Caco-2 (cell line): ENCODE measurements at regions of chr3 and their contacts with region 1.

Region 1: DNA sequence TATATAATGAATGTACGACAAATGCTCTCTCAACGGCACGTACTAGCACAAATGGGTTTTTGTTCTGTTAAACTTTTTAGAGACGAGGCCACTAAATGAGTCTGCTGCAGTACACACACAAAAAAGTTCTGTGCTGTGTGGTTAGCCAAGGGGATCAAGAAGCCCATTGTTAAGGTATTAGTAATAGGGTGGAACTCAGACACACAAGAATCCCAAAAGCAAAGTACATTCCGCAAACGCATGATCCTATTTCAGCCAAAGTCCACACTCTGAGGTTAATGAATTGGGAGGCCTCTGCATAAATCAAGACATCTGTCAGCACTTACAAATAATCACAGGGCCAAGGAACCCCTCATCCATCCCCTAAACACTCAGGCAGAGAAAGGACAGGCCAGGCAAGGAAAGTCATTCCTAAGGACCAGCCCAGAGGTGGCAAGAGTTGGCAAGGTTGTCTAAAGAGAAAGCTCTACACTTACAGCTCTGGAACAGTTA is 12.1 kb downstream of the OSBPL10 start:
- DNase-seq: peak; percentile 77 to 80
- H3K4me3 ChIP-seq: no peak overlapping the region
- H3K4me3 Mint-ChIP-seq: peak overlapping the region; percentile 71
- H3K27ac Mint-ChIP-seq: peak overlapping the region; percentile 97
- H3K4me1 ChIP-seq: peaks cover 56% of the 10 kb centered on the region
- H3K4me1 Mint-ChIP-seq: peaks cover 27% of the 10 kb centered on the region
- H3K27me3 ChIP-seq: no peaks in the 10 kb centered on the region
- H3K27me3 Mint-ChIP-seq: no peaks in the 10 kb centered on the region
- CTCF ChIP-seq: no peak

Region 2: GRCh38 chr3:31892916-31893573 is 75.9 kb before region 1 on chr3:
- CTCF ChIA-PET with region 1: no interaction called
- POLR2A ChIA-PET with region 1: no interaction called
- intact Hi-C with region 1: loop called (anchors 2 kb)
- DNase-seq: no peak
- H3K4me3 ChIP-seq: no peak overlapping the region
- H3K4me3 Mint-ChIP-seq: peak overlapping the region; percentile 70
- H3K27ac Mint-ChIP-seq: peak overlapping the region; percentile 92
- H3K4me1 ChIP-seq: peaks cover 53% of the 10 kb centered on the region
- H3K4me1 Mint-ChIP-seq: peaks cover 44% of the 10 kb centered on the region
- H3K27me3 ChIP-seq: no peaks in the 10 kb centered on the region
- H3K27me3 Mint-ChIP-seq: no peaks in the 10 kb centered on the region
- CTCF ChIP-seq: no peak

Region 3: DNA sequence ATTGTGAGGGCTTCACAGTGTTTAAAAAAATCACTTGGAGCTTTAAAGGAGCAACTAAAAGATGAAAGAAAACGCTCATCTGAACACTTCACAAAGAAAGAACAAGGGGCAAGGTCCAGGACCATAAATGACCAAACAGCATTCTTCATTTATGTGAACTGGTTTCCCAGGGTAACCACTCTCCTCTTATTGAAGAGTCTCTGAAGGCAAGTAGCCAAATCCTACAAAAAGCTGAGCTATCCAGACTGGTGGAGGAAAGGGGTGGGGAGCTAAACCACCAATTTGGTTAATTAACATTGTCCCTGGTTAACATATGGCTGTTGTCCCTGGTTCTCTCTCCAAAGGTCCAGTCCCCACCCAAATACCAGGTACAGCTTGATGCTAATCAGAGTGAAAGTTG is 46.0 kb before region 1 on chr3:
- CTCF ChIA-PET with region 1: no interaction called
- POLR2A ChIA-PET with region 1: no interaction called
- intact Hi-C with region 1: loop called (anchors 2 kb)
- DNase-seq: peak; percentile 59 to 81
- H3K4me3 ChIP-seq: peak overlapping the region; percentile 13; the same call in 1 of the 2 replicates
- H3K4me3 Mint-ChIP-seq: peak overlapping the region; percentile 70
- H3K27ac Mint-ChIP-seq: peak overlapping the region; percentile 98
- H3K4me1 ChIP-seq: peaks cover 63% of the 10 kb centered on the region
- H3K4me1 Mint-ChIP-seq: peaks cover 50% of the 10 kb centered on the region
- H3K27me3 ChIP-seq: no peaks in the 10 kb centered on the region
- H3K27me3 Mint-ChIP-seq: no peaks in the 10 kb centered on the region
- CTCF ChIP-seq: no peak

Region 4: DNA sequence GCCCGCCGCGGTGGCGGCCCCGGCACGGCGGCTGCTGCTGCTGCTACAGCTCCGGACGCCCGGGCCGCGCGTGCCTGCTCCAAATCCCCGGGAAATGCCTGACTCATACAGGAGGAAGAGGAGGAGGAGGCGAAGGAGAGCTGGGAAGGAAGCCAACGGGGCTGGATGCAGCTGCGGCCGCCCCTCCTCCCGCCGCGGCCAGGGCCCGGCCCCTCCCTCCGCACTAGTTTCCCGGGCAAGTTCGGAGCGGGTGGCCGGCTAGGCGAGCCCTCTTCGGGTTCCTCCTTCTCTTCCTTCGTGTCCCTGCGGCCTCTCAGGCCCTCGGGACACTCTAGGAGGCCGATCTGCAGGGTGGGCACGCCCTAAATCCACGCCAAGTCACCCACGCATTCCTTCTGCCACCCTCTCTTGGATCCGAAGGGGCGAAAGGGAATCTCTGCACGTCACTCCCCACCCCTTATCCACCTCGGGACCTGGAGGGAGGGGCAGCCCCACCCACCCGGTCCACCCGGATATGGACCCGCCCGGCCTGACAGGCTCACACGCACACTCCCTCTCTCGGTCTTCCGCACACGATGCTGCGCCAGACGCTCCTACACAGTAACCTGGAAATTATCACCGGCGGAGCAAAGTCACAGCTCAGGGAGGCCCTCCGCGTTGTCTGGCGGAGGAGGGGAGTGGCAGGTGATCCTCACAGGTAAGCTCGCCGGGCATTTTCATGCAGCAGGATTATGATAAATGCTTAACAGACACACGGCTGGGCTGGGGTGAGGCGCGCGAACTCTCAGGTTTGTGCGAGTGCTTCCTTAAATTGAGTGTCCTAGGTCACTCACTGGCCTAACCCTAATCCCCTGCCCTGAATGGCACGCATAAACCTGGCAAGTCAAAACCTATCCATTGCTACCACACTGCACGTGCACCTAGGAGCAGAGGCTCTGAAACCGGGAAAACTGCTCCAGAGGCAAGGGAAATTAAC is 12.5 kb after region 1 on chr3 and contains the starts of genes OSBPL10 and ZNF860:
- CTCF ChIA-PET with region 1: no interaction called
- POLR2A ChIA-PET with region 1: interaction called, 3 read pairs
- intact Hi-C with region 1: loop called (anchors 1 kb)
- DNase-seq: peak; percentile 84 to 89
- H3K4me3 ChIP-seq: peak within 1 kb of the TSS; percentile 62
- H3K4me3 Mint-ChIP-seq: peak within 1 kb of the TSS; percentile 93
- H3K27ac Mint-ChIP-seq: peak within 1 kb of the TSS; percentile 88
- H3K4me1 ChIP-seq: peaks cover 28% of the 10 kb centered on the region
- H3K4me1 Mint-ChIP-seq: peaks cover 23% of the 10 kb centered on the region
- H3K27me3 ChIP-seq: no peaks in the 10 kb centered on the region
- H3K27me3 Mint-ChIP-seq: no peaks in the 10 kb centered on the region
- CTCF ChIP-seq: no peak
- total RNA-seq, gene OSBPL10: 71.2 and 79.5 TPM in 2 replicates
- total RNA-seq, gene ZNF860: 4.7 and 5.9 TPM in 2 replicates